Thyroid gland (tissue), 4 donors: ENCODE measurements at regions of chr4 and their contacts with region 1.

Region 1: DNA sequence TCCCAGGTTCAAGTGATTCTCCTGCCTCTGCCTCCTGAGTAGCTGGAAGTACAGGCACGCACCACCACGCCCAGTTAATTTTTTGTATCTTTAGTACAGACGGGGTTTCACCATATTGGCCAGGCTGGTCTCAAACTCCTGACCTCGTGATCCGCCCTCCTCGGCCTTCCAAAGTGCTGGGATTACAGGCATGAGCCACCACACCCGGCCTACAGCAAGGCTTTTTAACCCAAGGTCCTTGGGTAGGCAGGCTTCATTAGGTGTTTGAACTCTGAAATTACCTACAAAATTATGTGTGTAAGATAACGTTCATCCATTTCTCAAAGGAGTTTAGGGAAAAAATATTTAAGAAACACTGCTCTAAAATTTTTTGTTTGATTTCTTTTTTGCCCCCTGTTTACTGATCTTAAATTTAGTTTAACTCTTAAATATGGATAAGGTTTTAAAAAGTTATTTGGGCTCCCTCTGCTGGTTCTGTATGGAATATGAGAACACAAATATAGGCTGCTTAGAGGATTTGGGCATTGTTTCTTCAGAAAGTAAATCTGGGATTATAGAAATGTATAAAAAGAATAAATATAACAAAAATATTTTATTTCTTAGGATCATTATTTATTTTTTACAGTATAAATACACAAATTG is 92.8 kb downstream of the CBR4 start:
- DNase-seq: no peak
- H3K4me3 ChIP-seq: no peak overlapping the region
- H3K27ac ChIP-seq: peak overlapping the region in 1 of 3 donors; percentile 49
- H3K4me1 ChIP-seq: no peaks in the 10 kb centered on the region
- H3K27me3 ChIP-seq: no peaks in the 10 kb centered on the region
- CTCF ChIP-seq: peak; percentile 22 to 66 (median 46)
- POLR2A ChIP-seq: no peak

Region 2: DNA sequence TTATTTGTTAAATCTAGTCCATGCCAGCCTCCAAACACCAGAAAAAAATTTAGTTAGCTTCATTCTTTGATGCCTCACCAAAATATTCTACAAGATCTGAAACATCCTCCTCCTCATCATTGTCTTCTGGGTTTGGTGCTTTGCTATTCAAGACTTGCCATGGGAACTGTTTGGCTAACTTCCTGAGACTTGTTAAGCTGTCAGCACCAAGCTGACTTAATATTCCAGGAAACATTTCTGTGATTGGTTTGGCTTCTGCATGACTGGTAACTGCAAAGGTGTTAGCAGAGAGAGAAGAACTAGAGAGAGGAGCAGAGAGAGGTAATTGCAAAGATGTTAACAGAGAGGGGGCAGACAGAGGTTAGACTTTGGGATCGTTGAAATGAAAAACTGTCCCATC is 319.1 kb before region 1 on chr4:
- intact Hi-C with region 1: loop called (anchors 10 kb)
- DNase-seq: no peak
- H3K4me3 ChIP-seq: no peak overlapping the region
- H3K27ac ChIP-seq: no peak overlapping the region
- H3K4me1 ChIP-seq: no peaks in the 10 kb centered on the region
- H3K27me3 ChIP-seq: no peaks in the 10 kb centered on the region
- CTCF ChIP-seq: no peak
- POLR2A ChIP-seq: no peak

Region 3: GRCh38 chr4:168710353-168710946 is 206.8 kb before region 1 on chr4:
- intact Hi-C with region 1: loop called (anchors 5 kb)
- DNase-seq: peak; percentile 58 to 65
- H3K4me3 ChIP-seq: no peak overlapping the region
- H3K27ac ChIP-seq: peak overlapping the region; percentile 62 to 77 (median 69)
- H3K4me1 ChIP-seq: peaks cover 14 to 18% of the 10 kb centered on the region in 2 donors
- H3K27me3 ChIP-seq: no peaks in the 10 kb centered on the region
- CTCF ChIP-seq: peak in 4 of 6 experiments; percentile 57 to 82 (median 67)
- POLR2A ChIP-seq: no peak